MCF 10A (cell line): ENCODE measurements at regions of chr13 and their contacts with region 1.

Region 1: DNA sequence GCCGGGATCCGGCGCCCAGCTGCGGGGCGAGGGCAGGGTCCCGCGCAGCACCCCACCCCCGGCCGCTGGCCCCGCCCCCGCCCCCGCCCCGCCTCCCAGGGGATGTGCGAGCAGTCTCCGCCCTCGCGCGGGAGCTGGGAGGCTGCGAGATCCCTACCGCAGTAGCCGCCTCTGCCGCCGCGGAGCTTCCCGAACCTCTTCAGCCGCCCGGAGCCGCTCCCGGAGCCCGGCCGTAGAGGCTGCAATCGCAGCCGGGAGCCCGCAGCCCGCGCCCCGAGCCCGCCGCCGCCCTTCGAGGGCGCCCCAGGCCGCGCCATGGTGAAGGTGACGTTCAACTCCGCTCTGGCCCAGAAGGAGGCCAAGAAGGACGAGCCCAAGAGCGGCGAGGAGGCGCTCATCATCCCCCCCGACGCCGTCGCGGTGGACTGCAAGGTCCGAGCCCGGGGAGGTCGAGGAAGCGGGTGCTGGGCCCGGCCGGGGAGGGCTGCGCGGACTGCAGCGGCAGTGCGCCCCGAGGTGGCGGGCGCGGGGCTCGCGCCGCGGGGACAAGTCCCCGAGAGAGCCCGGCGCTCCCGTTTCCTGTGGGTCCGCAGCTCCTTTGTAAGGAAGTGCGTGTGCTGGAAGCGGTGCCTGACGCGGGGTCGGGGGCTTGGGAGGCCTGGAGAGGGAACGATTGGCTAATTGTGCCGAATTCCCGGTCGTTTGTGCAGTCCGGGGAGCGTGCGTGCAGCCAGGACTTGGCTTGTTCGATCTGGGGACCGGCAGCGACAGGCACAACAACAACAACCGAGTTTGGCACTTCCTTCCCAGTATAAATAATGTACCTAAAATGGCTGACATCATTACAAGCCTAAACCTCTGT is at the start of gene ITM2B:
- DNase-seq: peak; percentile 68
- H3K4me3 Mint-ChIP-seq: peak within 1 kb of the TSS; percentile 89
- H3K27ac Mint-ChIP-seq: peak within 1 kb of the TSS; percentile 95
- H3K4me1 Mint-ChIP-seq: peaks cover 27% of the 10 kb centered on the region
- H3K27me3 Mint-ChIP-seq: peaks cover under 1% of the 10 kb centered on the region
- CTCF ChIP-seq: peak; percentile 40
- total RNA-seq, gene ITM2B: 144 and 179 TPM in 2 replicates

Region 2: GRCh38 chr13:48126944-48127830 is 106.1 kb before region 1 on chr13:
- CTCF ChIA-PET with region 1: interaction called, 17 read pairs
- POLR2A ChIA-PET with region 1: interaction called, 110 read pairs
- intact Hi-C with region 1: loop called (anchors 1 kb)
- DNase-seq: peak; percentile 82
- H3K4me3 Mint-ChIP-seq: no peak overlapping the region
- H3K27ac Mint-ChIP-seq: peak overlapping the region; percentile 64
- H3K4me1 Mint-ChIP-seq: peaks cover 21% of the 10 kb centered on the region
- H3K27me3 Mint-ChIP-seq: no peaks in the 10 kb centered on the region
- CTCF ChIP-seq: peak; percentile 64

Region 3: GRCh38 chr13:48210178-48210577 is 23.1 kb before region 1 on chr13:
- CTCF ChIA-PET with region 1: no interaction called
- POLR2A ChIA-PET with region 1: interaction called, 20 read pairs
- intact Hi-C with region 1: no loop called
- DNase-seq: peak; percentile 90
- H3K4me3 Mint-ChIP-seq: peak overlapping the region; percentile 54
- H3K27ac Mint-ChIP-seq: peak overlapping the region; percentile 53
- H3K4me1 Mint-ChIP-seq: peaks cover 9% of the 10 kb centered on the region
- H3K27me3 Mint-ChIP-seq: no peaks in the 10 kb centered on the region
- CTCF ChIP-seq: no peak

Region 4: DNA sequence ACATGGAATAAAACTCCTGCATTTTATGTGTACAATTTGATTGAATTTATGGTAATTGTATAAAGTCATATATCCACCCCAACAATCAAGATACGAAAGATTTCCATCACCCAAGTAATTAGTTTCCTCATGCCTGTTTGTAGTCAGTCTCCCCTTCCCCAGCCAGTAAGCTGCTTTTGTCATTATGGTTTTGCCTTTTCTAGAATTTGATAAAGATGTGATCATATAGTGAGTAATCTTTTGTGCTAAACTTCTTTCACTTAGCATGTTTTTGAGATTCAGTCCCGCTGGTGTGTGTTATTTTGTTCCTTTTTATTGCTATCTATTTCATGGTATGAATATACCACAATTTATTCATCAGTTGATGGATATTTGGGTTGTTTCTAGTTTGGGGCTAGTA is 15.7 kb after region 1 on chr13:
- CTCF ChIA-PET with region 1: interaction called, 4 read pairs
- POLR2A ChIA-PET with region 1: interaction called, 17 read pairs
- intact Hi-C with region 1: no loop called
- DNase-seq: no peak
- H3K4me3 Mint-ChIP-seq: no peak overlapping the region
- H3K27ac Mint-ChIP-seq: no peak overlapping the region
- H3K4me1 Mint-ChIP-seq: no peaks in the 10 kb centered on the region
- H3K27me3 Mint-ChIP-seq: no peaks in the 10 kb centered on the region
- CTCF ChIP-seq: no peak

Region 5: DNA sequence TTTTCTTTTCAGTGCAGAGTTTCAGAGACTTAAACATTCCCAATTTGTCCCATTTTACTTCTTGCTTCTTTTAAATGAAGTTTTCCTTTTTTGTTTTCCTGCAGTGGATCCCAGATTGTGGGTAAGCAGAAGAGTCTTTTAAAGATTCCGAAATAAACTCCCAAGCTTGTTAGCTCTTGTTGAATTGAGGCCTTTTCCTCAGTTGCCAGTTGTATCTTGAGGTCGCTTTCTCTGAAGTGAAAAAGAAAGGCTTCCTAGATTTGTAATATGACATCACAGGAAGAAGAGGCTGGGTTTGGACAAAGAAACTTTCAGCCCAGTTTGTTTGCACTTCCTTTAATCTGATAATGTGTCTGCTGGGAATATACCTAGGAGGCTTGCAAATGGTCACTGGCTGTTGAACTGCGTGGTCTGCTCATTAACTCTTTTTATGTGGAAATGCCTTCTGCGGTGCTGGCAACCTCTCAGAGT is 179.6 kb after region 1 on chr13 and contains the start of gene LPAR6:
- CTCF ChIA-PET with region 1: no interaction called
- POLR2A ChIA-PET with region 1: interaction called, 6 read pairs
- intact Hi-C with region 1: loop called (anchors 5 kb)
- DNase-seq: peak; percentile 64
- H3K4me3 Mint-ChIP-seq: peak within 1 kb of the TSS; percentile 96
- H3K27ac Mint-ChIP-seq: peak within 1 kb of the TSS; percentile 97
- H3K4me1 Mint-ChIP-seq: peaks cover 20% of the 10 kb centered on the region
- H3K27me3 Mint-ChIP-seq: no peaks in the 10 kb centered on the region
- CTCF ChIP-seq: no peak
- total RNA-seq, gene LPAR6: 2.2 and 3.1 TPM in 2 replicates